IMR-90 (cell line): ENCODE measurements at regions of chr15 and their contacts with region 1.

Region 1: DNA sequence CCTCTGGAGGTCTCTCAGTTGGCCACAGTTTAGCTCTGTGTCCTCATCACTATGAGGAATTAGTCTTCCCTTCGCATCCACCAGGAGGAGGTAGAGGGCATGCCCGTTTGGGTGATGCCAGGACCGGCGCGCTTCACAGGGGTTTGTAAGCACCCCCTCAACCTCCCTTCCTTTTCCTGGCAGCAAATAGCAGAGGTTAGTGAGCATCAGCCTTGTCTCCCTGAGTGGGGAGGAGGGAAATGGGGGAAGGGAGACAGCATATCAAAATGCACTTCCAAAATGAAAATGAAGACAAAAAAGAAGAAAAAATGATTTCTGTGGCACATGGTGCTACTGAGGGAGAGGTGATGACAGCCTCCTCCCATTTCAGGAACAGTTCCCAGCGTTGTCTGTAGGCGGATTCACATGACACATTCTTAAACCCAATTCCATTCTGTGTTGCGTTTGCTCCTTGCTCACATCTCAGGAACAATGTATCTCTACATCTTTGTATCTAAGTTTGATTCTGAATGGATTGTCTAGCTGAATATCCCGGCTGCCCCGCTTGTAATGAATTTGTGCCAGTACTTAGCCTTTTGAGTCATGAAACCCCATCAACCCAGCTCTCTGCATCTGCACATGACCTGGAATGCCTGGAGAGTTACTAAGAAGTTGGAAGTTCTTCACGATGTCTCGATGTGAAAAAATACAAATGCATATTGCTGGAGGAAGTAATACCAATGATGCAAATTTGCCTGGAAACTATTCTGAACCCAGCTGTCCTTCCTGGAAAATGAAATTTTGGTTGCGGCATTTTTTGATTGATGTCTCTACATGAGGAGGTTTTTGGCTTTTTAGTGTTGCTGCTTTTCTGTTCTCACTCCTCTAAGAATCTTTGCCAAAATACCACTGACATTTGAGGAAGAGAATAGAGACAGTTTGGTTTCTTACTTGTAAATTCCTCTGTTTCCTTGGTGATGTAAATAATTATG is 45.2 kb downstream of the TYRO3 start:
- DNase-seq: peak; percentile 91
- ATAC-seq: peak; percentile 84
- H3K4me3 ChIP-seq: peak overlapping the region; percentile 31; the same call in 1 of the 2 replicates
- H3K27ac ChIP-seq: no peak overlapping the region
- H3K4me1 ChIP-seq: peaks cover 6% of the 10 kb centered on the region
- H3K27me3 ChIP-seq: no peaks in the 10 kb centered on the region
- CTCF ChIP-seq: peak; percentile 73
- POLR2A ChIP-seq: no peak
- RAD21 ChIP-seq: peak; percentile 71

Region 2: DNA sequence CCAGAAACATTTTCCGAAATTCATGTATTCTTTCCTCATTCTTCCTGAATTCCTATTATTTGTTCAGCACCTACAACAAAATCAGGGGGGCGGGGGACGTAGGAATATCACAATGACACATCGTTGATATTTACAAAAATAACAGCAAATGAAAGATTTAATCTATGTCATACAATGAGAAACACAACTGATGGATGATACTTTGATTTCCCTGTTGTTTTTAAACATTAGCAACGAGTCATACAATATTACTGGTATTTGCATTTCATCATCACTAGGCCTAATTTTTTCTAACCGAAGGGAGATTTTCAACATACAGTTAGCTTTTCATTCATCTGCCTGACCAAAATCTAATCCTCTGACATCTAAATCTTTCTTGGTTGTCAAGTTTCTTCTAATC is 442.9 kb before region 1 on chr15:
- CTCF ChIA-PET with region 1: no interaction called
- POLR2A ChIA-PET with region 1: no interaction called
- dilution Hi-C with region 1: no loop called
- in situ Hi-C with region 1: no loop called
- intact Hi-C with region 1: no loop called
- DNase-seq: peak; percentile 36
- ATAC-seq: peak; percentile 62
- H3K4me3 ChIP-seq: no peak overlapping the region
- H3K27ac ChIP-seq: no peak overlapping the region
- H3K4me1 ChIP-seq: peaks cover 3% of the 10 kb centered on the region
- H3K27me3 ChIP-seq: no peaks in the 10 kb centered on the region
- CTCF ChIP-seq: no peak
- POLR2A ChIP-seq: no peak
- RAD21 ChIP-seq: no peak

Region 3: DNA sequence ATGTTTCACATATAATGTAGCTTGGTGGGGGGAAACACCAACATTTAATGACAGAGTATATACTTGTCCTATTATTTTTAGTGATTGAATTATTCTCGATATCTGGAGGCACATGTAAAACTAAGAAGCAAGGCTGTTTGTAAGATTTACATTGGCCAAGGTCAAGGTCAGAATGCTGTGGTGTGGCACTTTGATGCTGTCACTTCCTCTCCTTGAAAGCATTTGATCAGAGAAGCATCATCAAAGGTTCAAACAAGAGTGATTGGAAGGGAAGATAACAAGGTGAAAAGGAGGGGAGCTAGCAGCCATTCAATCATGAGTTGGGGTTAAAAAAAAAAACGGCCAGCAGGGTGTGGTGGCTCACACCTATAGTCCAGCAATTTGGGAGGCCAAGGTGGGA is 161.0 kb before region 1 on chr15:
- CTCF ChIA-PET with region 1: no interaction called
- POLR2A ChIA-PET with region 1: no interaction called
- dilution Hi-C with region 1: no loop called
- in situ Hi-C with region 1: no loop called
- intact Hi-C with region 1: no loop called
- DNase-seq: no peak
- ATAC-seq: no peak
- H3K4me3 ChIP-seq: no peak overlapping the region
- H3K27ac ChIP-seq: no peak overlapping the region
- H3K4me1 ChIP-seq: no peaks in the 10 kb centered on the region
- H3K27me3 ChIP-seq: no peaks in the 10 kb centered on the region
- CTCF ChIP-seq: no peak
- POLR2A ChIP-seq: no peak
- RAD21 ChIP-seq: no peak

Region 4: GRCh38 chr15:41621200-41622193 is 17.3 kb after region 1 on chr15:
- CTCF ChIA-PET with region 1: interaction called, 3 read pairs
- POLR2A ChIA-PET with region 1: interaction called, 17 read pairs
- dilution Hi-C with region 1: no loop called
- in situ Hi-C with region 1: no loop called
- intact Hi-C with region 1: no loop called
- DNase-seq: peak; percentile 77
- ATAC-seq: peak; percentile 91
- H3K4me3 ChIP-seq: peak overlapping the region; percentile 70
- H3K27ac ChIP-seq: peak overlapping the region; percentile 33; the same call in 1 of the 2 replicates
- H3K4me1 ChIP-seq: no peaks in the 10 kb centered on the region
- H3K27me3 ChIP-seq: no peaks in the 10 kb centered on the region
- CTCF ChIP-seq: no peak
- POLR2A ChIP-seq: no peak
- RAD21 ChIP-seq: no peak

Region 5: DNA sequence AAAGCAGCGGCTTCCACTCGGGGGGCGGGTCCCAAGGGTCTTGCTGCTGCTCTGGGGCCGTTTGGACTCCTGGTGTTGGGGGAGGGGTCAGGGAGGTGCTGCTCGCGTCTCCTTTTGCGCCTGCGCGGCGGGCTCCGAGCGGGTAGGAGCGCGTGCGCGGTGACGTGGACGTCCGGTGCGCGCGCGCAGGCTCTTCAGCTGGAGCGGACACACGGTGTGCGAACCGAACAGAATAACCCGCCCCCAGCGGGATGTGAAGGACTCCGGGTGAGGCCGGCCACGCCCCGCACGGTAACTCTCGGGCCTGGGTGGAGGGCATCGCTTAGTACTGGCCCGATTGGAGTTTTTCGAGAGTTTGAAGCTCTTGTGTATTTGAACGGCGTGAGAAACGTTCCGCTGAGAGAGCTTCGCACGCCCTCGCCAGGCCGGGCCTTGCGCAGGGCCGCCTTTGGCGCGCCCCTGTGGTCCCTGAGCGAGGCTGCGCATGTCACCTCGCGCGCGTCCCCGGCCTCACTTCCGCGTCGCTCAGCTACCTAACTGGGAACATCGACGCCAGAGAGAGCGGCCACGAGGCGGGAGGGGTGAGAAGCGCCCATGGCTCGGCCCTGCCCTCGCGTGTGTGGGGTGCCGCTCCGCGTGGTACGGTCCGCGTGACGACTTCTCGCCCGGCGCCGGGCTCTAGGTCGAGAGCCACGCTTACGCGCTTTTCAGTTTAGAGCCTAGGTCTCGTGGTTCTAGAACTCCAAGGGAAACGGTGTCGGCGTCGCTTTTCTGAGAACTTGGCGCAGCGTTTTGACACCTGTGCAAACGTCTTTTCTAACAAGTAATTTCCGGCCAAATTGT is 56.2 kb after region 1 on chr15 and contains the start of gene MGA:
- CTCF ChIA-PET with region 1: interaction called, 3 read pairs
- POLR2A ChIA-PET with region 1: no interaction called
- dilution Hi-C with region 1: no loop called
- in situ Hi-C with region 1: no loop called
- intact Hi-C with region 1: loop called (anchors 1 kb)
- DNase-seq: peak; percentile 92
- ATAC-seq: peak; percentile 89
- H3K4me3 ChIP-seq: peak within 1 kb of the TSS; percentile 64
- H3K27ac ChIP-seq: peak within 1 kb of the TSS; percentile 80
- H3K4me1 ChIP-seq: peaks cover 6% of the 10 kb centered on the region
- H3K27me3 ChIP-seq: no peaks in the 10 kb centered on the region
- CTCF ChIP-seq: 0 out of 2 replicates have a peak, but pooled peaks have one; percentile 22
- POLR2A ChIP-seq: peak; percentile 56; the same call in 1 of the 2 replicates
- RAD21 ChIP-seq: 0 out of 2 replicates have a peak, but pooled peaks have one; percentile 5
- total RNA-seq, gene MGA: 38.0 and 48.3 TPM in 2 replicates

Region 6: DNA sequence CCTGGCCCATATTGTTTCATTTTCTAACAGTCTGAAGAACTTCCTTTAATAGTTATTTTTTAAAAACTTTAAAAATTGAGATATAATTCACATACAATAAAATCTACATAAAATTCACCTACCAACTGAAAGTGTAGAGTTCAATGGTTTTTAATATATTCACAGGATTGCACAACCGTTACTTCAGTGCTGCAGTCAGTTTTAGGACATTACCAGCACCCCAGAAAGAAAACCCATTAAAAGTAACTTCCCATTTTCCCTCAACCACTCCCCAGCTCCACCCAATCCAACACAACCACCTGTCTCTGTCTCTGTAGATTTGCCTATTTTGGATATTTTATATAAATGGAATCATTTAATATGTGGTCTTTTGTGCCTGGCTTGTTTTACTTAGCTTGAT is 85.6 kb after region 1 on chr15:
- CTCF ChIA-PET with region 1: no interaction called
- POLR2A ChIA-PET with region 1: no interaction called
- dilution Hi-C with region 1: no loop called
- in situ Hi-C with region 1: no loop called
- intact Hi-C with region 1: no loop called
- DNase-seq: no peak
- ATAC-seq: no peak
- H3K4me3 ChIP-seq: no peak overlapping the region
- H3K27ac ChIP-seq: no peak overlapping the region
- H3K4me1 ChIP-seq: peaks cover 5% of the 10 kb centered on the region
- H3K27me3 ChIP-seq: no peaks in the 10 kb centered on the region
- CTCF ChIP-seq: no peak
- POLR2A ChIP-seq: no peak
- RAD21 ChIP-seq: no peak

Region 7: DNA sequence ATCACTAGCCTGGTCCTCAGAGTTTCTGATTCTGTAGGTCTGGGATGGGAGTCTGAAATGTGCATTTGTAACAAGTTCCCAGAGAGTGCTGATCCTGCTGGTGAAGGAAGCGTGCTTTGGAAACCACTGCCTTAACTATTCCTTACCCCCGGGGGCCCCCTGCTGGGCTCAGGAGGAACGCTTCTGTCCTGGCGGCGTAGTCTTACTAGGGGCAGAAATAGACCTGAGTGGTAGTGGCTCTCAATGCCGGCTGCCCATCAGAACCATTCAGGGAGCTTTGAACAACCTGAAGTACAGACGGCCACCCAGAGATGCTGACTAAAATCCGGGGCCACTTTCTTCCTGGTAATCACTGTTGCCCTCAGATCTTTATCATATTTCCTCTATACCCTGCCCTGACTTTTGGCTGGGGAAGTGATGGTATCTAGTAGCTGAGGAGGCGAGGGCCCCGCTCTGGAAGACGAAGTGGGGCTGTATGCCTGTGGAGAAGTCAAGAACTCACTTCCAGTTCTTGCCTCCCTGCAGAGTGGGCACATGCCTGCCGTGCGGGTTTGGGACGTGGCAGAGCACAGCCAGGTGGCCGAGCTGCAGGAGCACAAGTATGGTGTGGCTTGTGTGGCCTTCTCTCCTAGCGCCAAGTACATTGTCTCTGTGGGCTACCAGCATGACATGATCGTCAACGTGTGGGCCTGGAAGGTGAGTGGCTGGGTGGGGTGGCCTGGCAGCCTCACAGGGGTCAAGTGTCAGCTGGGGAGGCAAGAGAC is 207.4 kb after region 1 on chr15:
- CTCF ChIA-PET with region 1: no interaction called
- POLR2A ChIA-PET with region 1: no interaction called
- dilution Hi-C with region 1: no loop called
- in situ Hi-C with region 1: no loop called
- intact Hi-C with region 1: loop called (anchors 1 kb)
- DNase-seq: peak; percentile 81
- ATAC-seq: peak; percentile 100
- H3K4me3 ChIP-seq: no peak overlapping the region
- H3K27ac ChIP-seq: no peak overlapping the region
- H3K4me1 ChIP-seq: peaks cover 3% of the 10 kb centered on the region
- H3K27me3 ChIP-seq: no peaks in the 10 kb centered on the region
- CTCF ChIP-seq: peak; percentile 97
- POLR2A ChIP-seq: peak; percentile 62
- RAD21 ChIP-seq: peak; percentile 99